ENCODE measurements at regions of chr10 and their contacts with region 1.

Region 1: DNA sequence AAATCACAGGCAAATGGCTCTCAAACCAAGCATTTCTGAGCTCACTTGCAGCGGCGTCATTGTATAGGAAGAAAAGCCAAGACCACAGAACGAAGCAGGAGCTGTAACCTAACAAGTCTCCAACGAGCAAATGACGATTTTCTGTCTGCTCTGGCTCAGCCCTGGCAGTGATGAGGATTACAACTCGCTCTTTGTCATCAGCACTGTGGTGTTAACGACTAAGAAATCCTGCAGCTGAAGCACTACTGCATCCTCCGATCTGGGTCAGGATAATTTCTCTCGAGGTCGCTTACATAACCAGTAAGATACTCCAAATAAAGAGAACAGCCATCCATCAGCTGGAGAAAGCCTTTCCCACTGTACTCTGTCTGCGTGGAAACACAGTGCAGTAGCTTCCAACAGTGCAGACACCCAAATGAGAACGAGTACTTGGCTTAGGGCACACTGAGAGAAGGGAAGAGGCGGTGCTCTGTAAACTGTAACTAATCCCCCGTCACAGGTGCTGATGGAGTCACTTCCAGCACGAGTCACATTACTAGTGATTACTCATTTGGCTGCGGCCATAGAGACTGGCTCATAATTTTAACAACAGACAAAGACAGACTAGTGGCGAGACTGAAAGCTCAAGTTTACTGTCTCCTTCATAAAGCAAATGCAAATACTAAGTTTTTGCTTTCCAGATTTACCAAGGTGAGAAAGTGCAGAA is 135.8 kb downstream of the NRBF2 start:
- DNase-seq: peak; percentile 91
- H3K4me3 Mint-ChIP-seq: peak overlapping the region; percentile 88
- H3K27ac Mint-ChIP-seq: peak overlapping the region; percentile 98
- H3K4me1 Mint-ChIP-seq: peaks cover 22% of the 10 kb centered on the region
- H3K27me3 Mint-ChIP-seq: no peaks in the 10 kb centered on the region

Region 2: DNA sequence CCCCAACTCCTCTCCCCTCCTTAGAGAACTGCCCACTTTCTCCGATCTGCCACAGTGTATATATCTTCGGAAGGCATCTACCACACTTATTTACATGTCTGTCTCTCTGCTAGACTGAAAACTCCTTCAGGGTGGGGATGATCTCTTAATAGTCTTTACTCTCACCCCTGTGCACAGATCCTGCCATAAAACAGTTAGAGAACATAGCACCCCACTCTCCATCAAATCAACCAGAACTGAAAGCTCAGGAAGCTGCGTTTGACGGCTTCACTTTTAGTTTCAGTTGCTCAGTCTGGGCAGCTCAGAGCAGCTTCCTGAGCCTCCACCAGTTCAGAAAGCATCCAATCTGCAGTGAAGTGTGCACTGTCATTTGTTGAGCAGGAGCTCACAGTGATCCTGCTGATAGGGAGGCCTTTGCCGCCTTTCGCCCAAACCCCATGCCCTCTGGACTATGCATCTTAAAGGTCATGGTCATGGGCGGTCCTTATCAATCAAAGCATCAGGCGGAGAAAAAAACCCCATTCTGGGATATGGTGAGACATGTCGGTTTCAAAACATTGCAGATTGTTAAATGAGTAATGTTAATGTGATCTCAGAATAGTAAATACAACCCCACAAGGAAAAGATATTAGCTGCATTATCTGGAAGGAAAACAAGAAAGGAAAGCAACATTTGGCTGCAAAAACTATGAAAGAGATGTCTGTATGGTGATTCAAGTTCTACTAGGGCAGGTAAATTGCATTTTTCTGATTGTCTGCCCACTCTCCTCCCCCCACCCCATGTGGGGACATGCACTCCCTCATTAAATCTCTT is 631.5 kb before region 1 on chr10:
- CTCF ChIA-PET with region 1: no interaction called
- intact Hi-C with region 1: loop called (anchors 10 kb)
- DNase-seq: peak; percentile 81
- H3K4me3 Mint-ChIP-seq: no peak overlapping the region
- H3K27ac Mint-ChIP-seq: no peak overlapping the region
- H3K4me1 Mint-ChIP-seq: peaks cover 14% of the 10 kb centered on the region
- H3K27me3 Mint-ChIP-seq: no peaks in the 10 kb centered on the region

Region 3: DNA sequence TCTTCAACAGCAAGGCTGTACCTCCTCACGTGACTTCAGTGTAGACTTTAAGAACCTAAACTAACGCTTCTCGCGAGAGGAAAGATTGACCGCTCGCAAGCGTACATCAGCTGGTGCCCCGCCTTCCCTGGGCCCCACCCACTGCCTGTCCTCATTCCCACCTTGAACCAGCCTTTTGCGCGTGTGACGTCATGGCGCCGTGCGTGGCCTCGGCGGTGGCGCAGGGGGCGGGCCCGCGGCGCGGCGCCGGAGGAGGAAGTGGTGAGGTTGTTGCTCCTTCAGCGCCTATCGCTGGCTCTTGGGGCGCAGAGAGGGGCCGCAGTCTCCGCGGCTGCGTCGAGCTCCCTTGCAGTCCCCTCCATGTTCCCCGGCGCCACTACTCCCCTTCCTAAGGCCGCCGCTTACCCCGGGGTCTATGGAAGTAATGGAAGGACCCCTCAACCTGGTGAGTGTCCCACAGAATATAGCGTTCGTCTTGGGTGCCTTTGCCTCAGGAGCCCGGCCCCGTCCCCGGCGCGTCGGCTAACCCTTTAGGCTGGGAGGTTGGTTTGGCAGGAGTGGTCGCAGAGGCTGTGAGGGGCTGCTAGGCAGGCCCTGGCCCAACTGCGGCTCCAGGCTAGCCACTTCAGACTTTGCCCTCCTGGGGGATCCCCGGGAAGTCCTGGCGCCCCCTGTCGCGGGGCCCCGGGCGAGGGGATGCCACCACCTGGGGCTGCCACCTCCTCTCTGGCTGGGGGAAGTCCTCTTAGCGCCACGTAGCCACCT is 135.7 kb before region 1 on chr10 and contains the start of gene NRBF2:
- CTCF ChIA-PET with region 1: no interaction called
- intact Hi-C with region 1: loop called (anchors 1 kb)
- DNase-seq: peak; percentile 98
- H3K4me3 Mint-ChIP-seq: peak within 1 kb of the TSS; percentile 89
- H3K27ac Mint-ChIP-seq: peak within 1 kb of the TSS; percentile 92
- H3K4me1 Mint-ChIP-seq: peaks cover 38% of the 10 kb centered on the region
- H3K27me3 Mint-ChIP-seq: no peaks in the 10 kb centered on the region
- total RNA-seq, gene NRBF2: 15.4 to 15.6 TPM

Region 4: DNA sequence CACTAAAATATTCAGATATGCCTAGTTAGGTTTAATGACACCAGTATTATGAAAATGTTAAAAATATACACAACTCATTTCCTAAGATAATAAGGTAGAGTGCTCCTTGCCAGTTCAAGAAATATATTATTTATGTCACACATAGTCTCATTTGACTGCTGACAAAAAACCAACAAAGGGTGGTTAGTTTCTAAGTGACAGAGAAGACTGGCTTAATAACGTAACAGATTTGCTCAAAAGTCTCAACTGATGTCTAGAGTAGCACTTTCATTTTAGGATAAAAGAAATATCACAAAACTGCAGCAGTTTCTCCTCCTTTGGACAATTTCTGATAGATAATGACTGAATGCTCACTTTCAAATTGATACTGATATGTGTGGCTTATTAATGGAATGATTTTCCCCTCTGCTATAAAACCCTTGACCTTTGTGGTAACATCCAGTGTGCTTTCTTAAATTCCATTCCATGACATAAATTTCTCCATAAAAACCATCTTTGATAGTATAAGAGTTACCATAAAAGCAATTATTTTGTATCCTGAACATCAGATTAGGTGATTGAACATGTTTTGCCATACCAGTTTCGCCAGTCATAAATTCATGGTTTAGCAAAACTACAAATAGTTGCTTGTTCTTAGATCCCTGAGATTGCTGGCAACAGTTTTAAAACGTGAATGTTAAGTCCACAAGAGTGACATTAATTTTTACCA is 41.6 kb before region 1 on chr10:
- CTCF ChIA-PET with region 1: interaction called, 15 read pairs
- intact Hi-C with region 1: loop called (anchors 1 kb)
- DNase-seq: no peak
- H3K4me3 Mint-ChIP-seq: no peak overlapping the region
- H3K27ac Mint-ChIP-seq: peak overlapping the region; percentile 97
- H3K4me1 Mint-ChIP-seq: peaks cover 56% of the 10 kb centered on the region
- H3K27me3 Mint-ChIP-seq: no peaks in the 10 kb centered on the region

Region 5: GRCh38 chr10:63437116-63437949 is 168.4 kb after region 1 on chr10:
- CTCF ChIA-PET with region 1: no interaction called
- intact Hi-C with region 1: loop called (anchors 1 kb)
- DNase-seq: no peak
- H3K4me3 Mint-ChIP-seq: no peak overlapping the region
- H3K27ac Mint-ChIP-seq: no peak overlapping the region
- H3K4me1 Mint-ChIP-seq: peaks cover 22% of the 10 kb centered on the region
- H3K27me3 Mint-ChIP-seq: no peaks in the 10 kb centered on the region

Region 6: DNA sequence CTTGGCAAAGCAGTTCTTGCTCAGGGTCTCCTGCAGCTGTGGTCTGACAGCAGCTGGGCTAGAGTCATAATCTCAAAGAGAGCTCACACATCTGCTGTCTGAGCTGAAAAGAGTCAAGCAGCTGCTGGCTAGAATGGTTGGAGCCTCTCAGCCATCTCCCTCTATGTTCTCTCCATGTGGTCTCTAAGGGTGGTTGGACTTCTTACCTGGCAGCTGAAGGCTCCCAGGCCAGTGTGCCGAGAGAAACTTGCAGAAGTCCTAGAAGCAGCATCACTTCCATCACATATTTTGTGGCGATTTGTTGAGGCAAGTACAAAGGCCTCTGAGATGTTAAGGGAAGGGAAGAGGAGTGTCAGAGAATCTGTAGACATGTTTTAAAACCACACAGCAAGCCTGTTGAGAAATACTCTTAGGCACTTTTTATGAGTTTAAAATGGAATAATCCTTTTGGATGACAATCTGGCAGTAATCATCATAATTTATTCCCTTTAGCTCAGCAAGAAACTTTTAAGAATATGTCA is 345.5 kb after region 1 on chr10:
- CTCF ChIA-PET with region 1: no interaction called
- intact Hi-C with region 1: loop called (anchors 1 kb)
- DNase-seq: no peak
- H3K4me3 Mint-ChIP-seq: no peak overlapping the region
- H3K27ac Mint-ChIP-seq: no peak overlapping the region
- H3K4me1 Mint-ChIP-seq: peaks cover 14% of the 10 kb centered on the region
- H3K27me3 Mint-ChIP-seq: no peaks in the 10 kb centered on the region

Measured in activated naive CD4-positive, alpha-beta T cell treated with anti-CD3 and anti-CD28 coated beads for 36 hours (primary cell).